ENCODE measurements at regions of chr16 and their contacts with region 1.

Region 1: GRCh38 chr16:17777408-17777863 is 306.7 kb upstream of the XYLT1 start:
- DNase-seq: peak; percentile 57
- H3K4me3 Mint-ChIP-seq: no peak overlapping the region
- H3K27ac Mint-ChIP-seq: no peak overlapping the region
- H3K4me1 Mint-ChIP-seq: no peaks in the 10 kb centered on the region
- H3K27me3 Mint-ChIP-seq: no peaks in the 10 kb centered on the region
- CTCF ChIP-seq: no peak

Region 2: DNA sequence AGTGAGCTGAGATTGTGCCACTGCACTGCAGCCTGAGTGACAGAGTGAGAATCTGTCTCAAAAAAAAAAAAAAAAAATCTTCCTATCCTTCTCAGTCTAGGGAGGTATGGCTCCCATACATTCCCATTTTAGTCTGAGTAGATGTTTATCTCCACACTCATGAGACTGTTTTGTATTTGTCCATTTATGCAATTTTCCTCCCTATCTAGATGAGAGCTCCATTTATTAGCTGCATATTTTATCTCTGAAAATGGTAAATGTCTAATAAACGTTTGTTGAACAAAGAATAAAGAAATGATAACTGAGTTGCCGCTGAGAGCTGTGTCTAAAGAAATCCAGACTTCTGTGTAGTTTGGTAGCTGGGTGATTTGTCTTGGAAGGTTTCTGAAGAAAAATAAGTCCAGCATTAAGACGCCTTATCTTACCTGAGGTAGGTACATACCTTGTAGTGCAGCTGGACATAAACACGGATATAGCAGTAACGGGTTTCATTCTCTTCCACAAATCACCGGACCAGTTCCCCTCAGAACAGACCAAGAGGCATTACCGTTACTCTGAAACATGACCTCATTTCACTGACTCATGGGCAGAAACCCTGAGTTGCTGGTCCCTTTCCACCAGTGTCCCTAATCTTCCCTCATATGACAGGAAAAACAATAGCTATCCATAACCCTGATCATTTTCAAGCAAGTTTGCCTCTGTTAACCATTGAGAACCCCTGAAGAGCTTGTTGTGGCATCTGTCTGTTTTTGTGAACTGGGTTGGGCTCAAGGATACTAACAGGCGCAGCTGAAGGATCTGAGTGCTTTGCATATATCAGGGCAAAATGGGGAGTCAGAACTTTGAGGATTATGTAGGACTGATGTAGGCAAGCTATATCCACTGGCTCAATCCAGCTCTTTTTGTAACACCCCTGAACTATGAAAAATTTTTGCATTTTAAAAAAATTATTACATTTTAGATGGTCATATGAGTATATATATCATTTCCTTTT is 129.3 kb before region 1 on chr16:
- CTCF ChIA-PET with region 1: no interaction called
- POLR2A ChIA-PET with region 1: no interaction called
- intact Hi-C with region 1: no loop called
- DNase-seq: no peak
- H3K4me3 Mint-ChIP-seq: no peak overlapping the region
- H3K27ac Mint-ChIP-seq: no peak overlapping the region
- H3K4me1 Mint-ChIP-seq: no peaks in the 10 kb centered on the region
- H3K27me3 Mint-ChIP-seq: no peaks in the 10 kb centered on the region
- CTCF ChIP-seq: no peak

Region 3: GRCh38 chr16:17828012-17828411 is 50.6 kb after region 1 on chr16:
- CTCF ChIA-PET with region 1: no interaction called
- POLR2A ChIA-PET with region 1: no interaction called
- intact Hi-C with region 1: loop called (anchors 2 kb)
- DNase-seq: peak; percentile 75
- H3K4me3 Mint-ChIP-seq: no peak overlapping the region
- H3K27ac Mint-ChIP-seq: no peak overlapping the region
- H3K4me1 Mint-ChIP-seq: no peaks in the 10 kb centered on the region
- H3K27me3 Mint-ChIP-seq: no peaks in the 10 kb centered on the region
- CTCF ChIP-seq: no peak

Measured in MCF 10A (cell line).